Activated CD8-positive, alpha-beta T cell treated with anti-CD3 and anti-CD28 coated beads, Interleukin-2, amount 10 ng/mL, durations not matched to agents 7 days and 5 days (primary cell): ENCODE measurements at regions of chr19 and their contacts with region 1.

Region 1: DNA sequence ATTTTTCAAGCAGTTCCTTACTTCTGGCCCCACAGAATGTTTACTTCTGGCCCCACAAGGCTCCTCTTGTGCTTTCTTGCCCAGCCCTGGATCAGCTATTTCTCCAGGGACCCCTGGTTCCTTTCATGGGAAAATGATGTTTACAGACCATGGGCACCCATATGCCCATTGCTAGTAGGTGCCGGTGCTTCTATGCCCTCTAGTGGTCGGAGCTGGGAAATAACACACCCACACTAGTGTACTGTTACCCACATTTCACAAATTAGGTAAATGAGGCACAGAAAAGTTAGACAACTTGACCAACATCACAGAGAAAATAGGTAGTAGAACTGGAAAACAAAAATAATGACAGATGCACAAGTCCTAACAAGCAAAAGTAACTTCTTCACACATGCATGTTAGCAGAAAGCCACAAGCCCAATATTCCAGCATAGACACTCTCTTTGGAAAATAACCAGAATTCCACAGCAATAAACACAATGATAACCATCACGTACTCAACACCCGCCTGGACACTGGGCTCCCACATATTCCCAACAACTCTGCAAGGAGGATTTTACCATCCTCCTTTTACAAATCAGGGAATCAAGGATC is 1.3 kb upstream of the CEACAM6 start:
- DNase-seq: peak; percentile 78
- ATAC-seq: peak; percentile 89
- H3K4me3 Mint-ChIP-seq: no peak overlapping the region
- H3K27ac Mint-ChIP-seq: no peak overlapping the region
- H3K4me1 Mint-ChIP-seq: no peaks in the 10 kb centered on the region
- H3K27me3 Mint-ChIP-seq: peaks cover 34% of the 10 kb centered on the region

Region 2: DNA sequence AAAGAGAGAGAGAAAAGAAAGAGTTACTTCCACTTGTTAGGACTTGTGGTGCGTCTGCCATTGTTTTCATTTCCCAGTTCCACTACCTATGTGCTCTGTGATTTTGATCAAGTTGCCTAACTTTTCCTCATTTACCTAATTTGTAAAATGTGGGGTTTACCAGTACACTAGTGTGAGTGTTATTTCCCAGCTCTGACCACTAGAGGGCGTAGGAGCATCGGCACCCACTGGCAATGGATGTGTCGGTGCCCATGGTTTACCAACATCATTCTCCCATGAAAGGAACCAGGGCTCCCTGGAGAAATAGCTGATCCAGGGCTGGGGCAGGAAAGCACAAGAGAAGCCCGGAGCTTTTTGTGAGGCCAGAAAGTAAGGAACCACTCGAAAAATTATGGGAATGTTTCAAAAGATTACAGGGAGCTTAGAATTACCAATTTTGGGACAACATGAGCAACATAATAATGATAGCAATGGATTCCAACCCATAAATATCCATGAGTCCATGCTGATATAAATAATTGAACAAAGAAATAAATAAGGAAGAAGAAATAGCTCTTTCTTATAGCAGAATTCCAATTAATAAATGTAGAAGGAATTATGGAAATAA is 112.1 kb before region 1 on chr19:
- CTCF ChIA-PET with region 1: interaction called, 15 read pairs
- POLR2A ChIA-PET with region 1: no interaction called
- DNase-seq: peak; percentile 79
- ATAC-seq: peak; percentile 89
- H3K4me3 Mint-ChIP-seq: no peak overlapping the region
- H3K27ac Mint-ChIP-seq: no peak overlapping the region
- H3K4me1 Mint-ChIP-seq: no peaks in the 10 kb centered on the region
- H3K27me3 Mint-ChIP-seq: peaks cover 13% of the 10 kb centered on the region

Region 3: DNA sequence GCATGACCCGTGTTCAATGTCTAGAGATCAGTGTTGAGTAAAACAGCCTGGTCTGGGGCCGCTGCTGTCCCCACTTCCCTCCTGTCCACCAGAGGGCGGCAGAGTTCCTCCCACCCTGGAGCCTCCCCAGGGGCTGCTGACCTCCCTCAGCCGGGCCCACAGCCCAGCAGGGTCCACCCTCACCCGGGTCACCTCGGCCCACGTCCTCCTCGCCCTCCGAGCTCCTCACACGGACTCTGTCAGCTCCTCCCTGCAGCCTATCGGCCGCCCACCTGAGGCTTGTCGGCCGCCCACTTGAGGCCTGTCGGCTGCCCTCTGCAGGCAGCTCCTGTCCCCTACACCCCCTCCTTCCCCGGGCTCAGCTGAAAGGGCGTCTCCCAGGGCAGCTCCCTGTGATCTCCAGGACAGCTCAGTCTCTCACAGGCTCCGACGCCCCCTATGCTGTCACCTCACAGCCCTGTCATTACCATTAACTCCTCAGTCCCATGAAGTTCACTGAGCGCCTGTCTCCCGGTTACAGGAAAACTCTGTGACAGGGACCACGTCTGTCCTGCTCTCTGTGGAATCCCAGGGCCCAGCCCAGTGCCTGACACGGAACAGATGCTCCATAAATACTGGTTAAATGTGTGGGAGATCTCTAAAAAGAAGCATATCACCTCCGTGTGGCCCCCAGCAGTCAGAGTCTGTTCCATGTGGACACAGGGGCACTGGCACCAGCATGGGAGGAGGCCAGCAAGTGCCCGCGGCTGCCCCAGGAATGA is 47.1 kb before region 1 on chr19:
- CTCF ChIA-PET with region 1: interaction called, 16 read pairs
- POLR2A ChIA-PET with region 1: no interaction called
- DNase-seq: peak; percentile 76
- ATAC-seq: peak; percentile 96
- H3K4me3 Mint-ChIP-seq: peak overlapping the region; percentile 47
- H3K27ac Mint-ChIP-seq: no peak overlapping the region
- H3K4me1 Mint-ChIP-seq: peaks cover 2% of the 10 kb centered on the region
- H3K27me3 Mint-ChIP-seq: peaks cover 9% of the 10 kb centered on the region

Region 4: DNA sequence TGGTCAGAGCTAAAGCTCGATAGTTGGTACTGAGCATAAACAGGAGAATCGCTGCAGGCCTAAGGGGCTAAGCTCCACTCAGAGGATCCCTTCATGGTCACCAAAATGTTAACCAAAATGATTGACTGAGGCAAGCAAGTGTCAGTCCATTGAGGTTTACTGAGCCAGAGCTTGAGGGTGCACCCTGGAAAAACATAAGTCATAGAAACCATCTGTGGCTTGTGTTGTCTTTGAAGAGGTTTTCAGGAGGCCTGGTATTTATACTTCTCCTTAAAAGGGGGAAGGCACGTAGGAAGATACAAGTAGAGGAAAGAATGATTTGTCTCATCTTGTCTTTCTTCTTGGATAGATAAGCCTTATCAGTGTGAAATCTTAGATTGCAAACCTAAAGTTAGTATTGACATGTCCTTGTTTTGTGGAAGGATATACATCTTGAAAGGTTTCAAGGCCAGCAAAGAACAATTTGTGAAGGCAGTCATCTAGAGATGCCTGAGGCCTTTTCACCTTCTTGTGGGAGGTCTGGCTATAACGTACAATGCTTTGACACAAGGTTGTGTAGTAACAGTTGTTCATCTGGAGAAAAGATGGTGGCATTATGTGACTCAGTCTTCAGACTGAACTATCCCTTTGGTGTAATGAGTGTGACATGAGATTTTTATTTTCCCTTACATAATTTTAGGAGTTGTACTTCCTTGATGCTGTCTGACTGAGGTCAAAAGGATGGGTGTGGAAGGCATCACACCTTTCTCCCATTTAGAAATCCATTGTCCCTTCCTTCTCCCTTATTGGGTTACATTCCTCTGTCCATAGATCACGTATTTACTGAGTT is 13.4 kb before region 1 on chr19:
- CTCF ChIA-PET with region 1: interaction called, 16 read pairs
- POLR2A ChIA-PET with region 1: no interaction called
- DNase-seq: no peak
- ATAC-seq: peak; percentile 51
- H3K4me3 Mint-ChIP-seq: no peak overlapping the region
- H3K27ac Mint-ChIP-seq: no peak overlapping the region
- H3K4me1 Mint-ChIP-seq: peaks cover 21% of the 10 kb centered on the region
- H3K27me3 Mint-ChIP-seq: peaks cover 43% of the 10 kb centered on the region

Region 5: DNA sequence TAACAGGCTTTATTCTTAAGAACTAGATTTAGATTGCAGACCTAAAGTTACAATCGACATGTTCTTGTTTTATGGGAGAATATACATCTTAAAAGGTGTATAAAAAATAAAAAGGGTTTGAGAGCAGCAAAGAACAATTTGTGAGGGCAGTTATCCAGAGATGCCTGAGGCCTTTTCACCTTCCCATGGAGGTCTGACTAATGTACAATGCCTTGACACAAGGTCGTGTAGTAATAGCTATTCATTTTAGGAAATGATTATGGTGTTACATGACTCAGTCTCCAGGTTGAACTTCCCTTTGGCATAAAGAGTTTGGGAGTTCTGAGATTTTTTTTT is 21.3 kb after region 1 on chr19:
- CTCF ChIA-PET with region 1: interaction called, 177 read pairs
- POLR2A ChIA-PET with region 1: no interaction called
- DNase-seq: no peak
- ATAC-seq: no peak
- H3K4me3 Mint-ChIP-seq: no peak overlapping the region
- H3K27ac Mint-ChIP-seq: no peak overlapping the region
- H3K4me1 Mint-ChIP-seq: peaks cover 22% of the 10 kb centered on the region
- H3K27me3 Mint-ChIP-seq: peaks cover 67% of the 10 kb centered on the region

Region 6: GRCh38 chr19:41785653-41786052 is 31.6 kb after region 1 on chr19:
- CTCF ChIA-PET with region 1: interaction called, 177 read pairs
- POLR2A ChIA-PET with region 1: no interaction called
- DNase-seq: peak; percentile 85
- ATAC-seq: peak; percentile 93
- H3K4me3 Mint-ChIP-seq: no peak overlapping the region
- H3K27ac Mint-ChIP-seq: no peak overlapping the region
- H3K4me1 Mint-ChIP-seq: peaks cover 17% of the 10 kb centered on the region
- H3K27me3 Mint-ChIP-seq: peaks cover 31% of the 10 kb centered on the region

Region 7: DNA sequence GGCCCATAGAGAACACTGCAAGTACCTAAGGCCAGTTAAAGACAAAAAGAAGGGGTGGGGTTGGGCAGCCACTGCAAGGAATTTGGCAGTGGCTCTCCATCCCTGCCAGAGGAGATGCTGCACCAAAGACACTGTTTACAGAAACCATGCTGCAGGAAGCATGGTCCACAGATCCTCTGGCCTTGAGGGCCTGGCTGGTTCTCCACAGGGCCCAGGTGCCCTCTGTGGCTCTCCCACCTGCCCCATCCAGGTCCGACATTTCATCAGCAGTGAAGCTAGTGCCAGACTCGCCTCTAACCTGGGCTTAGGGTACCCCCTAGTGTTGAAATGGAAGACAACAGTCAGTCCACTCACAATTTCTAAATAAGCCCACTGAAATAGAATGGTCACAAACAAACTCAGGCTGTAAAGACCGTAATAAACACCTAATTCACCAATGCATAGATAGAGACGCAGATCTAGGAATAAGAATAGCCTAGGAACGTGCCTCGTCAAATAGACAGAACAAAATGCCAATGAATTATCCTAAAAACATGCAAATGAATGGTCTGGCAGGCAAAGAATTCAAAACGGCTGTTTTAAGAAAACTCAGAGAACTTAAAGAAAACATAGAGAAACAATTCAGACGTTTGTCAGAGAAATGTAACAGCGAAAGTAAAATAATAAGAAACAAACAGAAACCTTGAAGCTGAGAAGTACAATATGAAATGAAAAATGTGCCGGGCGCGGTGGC is 67.1 kb after region 1 on chr19:
- CTCF ChIA-PET with region 1: interaction called, 15 read pairs
- POLR2A ChIA-PET with region 1: no interaction called
- DNase-seq: peak; percentile 66
- ATAC-seq: peak; percentile 88
- H3K4me3 Mint-ChIP-seq: no peak overlapping the region
- H3K27ac Mint-ChIP-seq: no peak overlapping the region
- H3K4me1 Mint-ChIP-seq: no peaks in the 10 kb centered on the region
- H3K27me3 Mint-ChIP-seq: peaks cover 16% of the 10 kb centered on the region

Region 8: GRCh38 chr19:41934849-41935374 is 180.9 kb after region 1 on chr19:
- CTCF ChIA-PET with region 1: no interaction called
- POLR2A ChIA-PET with region 1: no interaction called
- DNase-seq: peak; percentile 85
- ATAC-seq: peak; percentile 75
- H3K4me3 Mint-ChIP-seq: no peak overlapping the region
- H3K27ac Mint-ChIP-seq: no peak overlapping the region
- H3K4me1 Mint-ChIP-seq: peaks cover 41% of the 10 kb centered on the region
- H3K27me3 Mint-ChIP-seq: peaks cover 48% of the 10 kb centered on the region